CD4-positive, alpha-beta T cell (primary cell): ENCODE measurements at regions of chr7 and their contacts with region 1.

Region 1: GRCh38 chr7:95376632-95377315 is 19.4 kb downstream of the PON3 start:
- DNase-seq: peak in 2 of 14 experiments; percentile 13 to 29
- ATAC-seq: no peak
- H3K4me3 ChIP-seq: no peak overlapping the region
- H3K4me3 Mint-ChIP-seq: no peak overlapping the region
- H3K27ac ChIP-seq: no peak overlapping the region
- H3K27ac Mint-ChIP-seq: no peak overlapping the region
- H3K4me1 ChIP-seq: no peaks in the 10 kb centered on the region
- H3K4me1 Mint-ChIP-seq: no peaks in the 10 kb centered on the region
- H3K27me3 ChIP-seq: no peaks in the 10 kb centered on the region
- H3K27me3 Mint-ChIP-seq: peaks cover 5% of the 10 kb centered on the region
- CTCF ChIP-seq: no peak

Region 2: DNA sequence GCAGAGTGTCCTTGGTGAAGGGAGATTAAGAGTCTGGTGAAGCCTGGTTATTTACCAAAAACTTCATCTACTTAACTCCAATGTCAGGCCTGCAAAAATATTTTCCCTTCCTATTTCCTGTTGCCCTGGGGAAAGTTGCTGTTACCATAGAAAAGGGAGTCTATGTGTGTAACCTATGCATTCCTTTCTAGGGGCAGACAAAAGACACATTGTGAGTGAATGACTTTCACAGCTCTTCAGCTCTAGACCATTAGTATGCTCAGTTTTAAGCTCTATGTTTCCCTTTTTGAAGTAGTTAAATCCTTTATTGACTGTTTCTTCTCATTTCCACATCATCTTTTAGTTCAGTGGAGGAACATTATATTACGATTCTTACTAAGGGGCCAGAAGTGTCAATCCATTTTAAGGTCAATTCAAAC is 675.2 kb before region 1 on chr7:
- CTCF ChIA-PET with region 1: no interaction called
- POLR2A ChIA-PET with region 1: no interaction called
- intact Hi-C with region 1: loop called in 1 of 2 experiments (anchors 5 kb)
- DNase-seq: no peak
- ATAC-seq: no peak
- H3K4me3 ChIP-seq: no peak overlapping the region
- H3K4me3 Mint-ChIP-seq: no peak overlapping the region
- H3K27ac ChIP-seq: no peak overlapping the region
- H3K27ac Mint-ChIP-seq: no peak overlapping the region
- H3K4me1 ChIP-seq: no peaks in the 10 kb centered on the region
- H3K4me1 Mint-ChIP-seq: no peaks in the 10 kb centered on the region
- H3K27me3 ChIP-seq: peaks cover 0 to 3% of the 10 kb centered on the region in 2 experiments
- H3K27me3 Mint-ChIP-seq: peaks cover 15% of the 10 kb centered on the region
- CTCF ChIP-seq: no peak

Region 3: GRCh38 chr7:95213809-95214492 is 162.8 kb before region 1 on chr7:
- CTCF ChIA-PET with region 1: no interaction called
- POLR2A ChIA-PET with region 1: no interaction called
- intact Hi-C with region 1: no loop called
- DNase-seq: no peak
- ATAC-seq: no peak
- H3K4me3 ChIP-seq: no peak overlapping the region
- H3K4me3 Mint-ChIP-seq: no peak overlapping the region
- H3K27ac ChIP-seq: no peak overlapping the region
- H3K27ac Mint-ChIP-seq: no peak overlapping the region
- H3K4me1 ChIP-seq: no peaks in the 10 kb centered on the region
- H3K4me1 Mint-ChIP-seq: no peaks in the 10 kb centered on the region
- H3K27me3 ChIP-seq: no peaks in the 10 kb centered on the region
- H3K27me3 Mint-ChIP-seq: no peaks in the 10 kb centered on the region
- CTCF ChIP-seq: no peak

Region 4: DNA sequence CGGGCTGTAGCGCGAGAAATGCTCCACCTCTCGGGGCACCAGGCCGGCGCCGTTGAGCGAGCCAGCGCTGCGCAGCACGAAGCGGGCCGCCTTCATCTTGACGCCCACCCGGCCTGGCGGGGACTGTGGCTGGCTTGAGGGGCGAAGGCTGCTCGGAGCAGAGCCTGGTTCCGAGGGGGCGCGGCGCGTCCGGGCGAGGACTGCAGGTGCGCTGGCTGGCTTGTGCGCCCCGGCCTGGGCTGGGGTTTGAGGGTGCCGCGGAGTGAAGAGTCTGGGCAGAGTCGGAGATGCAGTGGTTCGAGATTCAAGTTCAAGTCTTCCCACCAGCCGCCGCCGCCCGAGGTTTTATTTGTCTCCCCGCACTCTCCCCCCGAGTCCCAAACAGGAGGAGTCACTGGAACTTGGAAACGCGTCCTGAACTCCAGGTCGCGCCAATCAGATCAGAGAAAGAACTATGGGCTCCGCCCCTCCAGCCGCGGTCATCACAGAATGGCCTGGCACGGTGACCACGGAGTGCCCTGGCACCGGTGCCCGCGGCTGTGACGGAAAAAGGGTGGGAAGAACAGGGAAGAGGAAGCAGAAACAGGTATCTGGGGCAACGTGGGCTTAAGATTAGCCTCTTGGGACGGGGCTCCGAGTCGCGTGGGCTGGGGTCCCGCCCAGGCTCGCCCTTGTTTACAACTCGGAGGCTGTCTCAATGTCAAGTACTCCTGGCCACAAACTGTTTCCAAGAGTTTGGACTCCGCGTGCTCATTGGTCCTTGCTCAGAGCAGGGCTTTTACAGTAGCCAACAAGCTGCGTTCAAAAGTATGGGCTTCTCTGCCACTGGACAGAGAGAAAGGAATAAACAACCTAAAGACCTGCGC is 219.7 kb after region 1 on chr7 and contains the start of gene PDK4:
- CTCF ChIA-PET with region 1: no interaction called
- POLR2A ChIA-PET with region 1: no interaction called
- intact Hi-C with region 1: no loop called
- DNase-seq: peak in 3 of 14 experiments; percentile 2 to 29 (median 23)
- ATAC-seq: no peak
- H3K4me3 ChIP-seq: peak within 1 kb of the TSS; percentile 29
- H3K4me3 Mint-ChIP-seq: no peak within 1 kb of the TSS
- H3K27ac ChIP-seq: no peak within 1 kb of the TSS
- H3K27ac Mint-ChIP-seq: no peak within 1 kb of the TSS
- H3K4me1 ChIP-seq: no peaks in the 10 kb centered on the region
- H3K4me1 Mint-ChIP-seq: peaks cover 4% of the 10 kb centered on the region
- H3K27me3 ChIP-seq: peaks cover 5 to 19% of the 10 kb centered on the region in 2 experiments
- H3K27me3 Mint-ChIP-seq: peaks cover 26% of the 10 kb centered on the region
- CTCF ChIP-seq: no peak
- total RNA-seq, gene PDK4: not detected

Region 5: DNA sequence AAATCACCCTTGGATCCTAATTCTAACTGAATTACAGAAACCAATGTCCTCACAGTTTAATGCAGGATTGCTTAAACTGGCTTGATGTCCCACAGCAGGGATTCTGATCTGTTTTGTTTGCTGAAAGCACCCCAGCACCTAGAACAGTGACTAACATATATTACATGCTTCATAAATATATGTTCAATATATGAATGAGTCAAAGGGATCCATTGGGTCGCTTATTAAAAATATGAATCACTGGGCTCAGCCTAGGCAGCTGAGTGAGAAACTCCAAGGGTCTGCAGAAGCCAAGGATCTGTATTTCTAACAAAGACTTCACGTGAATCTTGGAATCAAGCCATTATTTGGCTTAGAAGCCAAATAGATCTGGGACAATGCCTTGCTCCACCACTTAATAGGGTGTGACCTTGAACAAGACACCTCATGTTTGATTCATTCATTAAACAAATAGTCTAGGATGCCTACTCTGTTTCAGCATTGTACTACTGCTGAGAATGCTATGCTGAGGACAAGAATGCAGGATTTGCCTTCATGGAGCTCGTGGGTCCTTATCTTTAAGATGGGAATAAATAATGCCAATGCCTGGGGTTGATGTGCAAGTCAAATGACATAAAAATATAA is 1525.2 kb after region 1 on chr7:
- CTCF ChIA-PET with region 1: no interaction called
- POLR2A ChIA-PET with region 1: no interaction called
- intact Hi-C with region 1: no loop called
- DNase-seq: no peak
- ATAC-seq: no peak
- H3K4me3 ChIP-seq: no peak overlapping the region
- H3K4me3 Mint-ChIP-seq: no peak overlapping the region
- H3K27ac ChIP-seq: no peak overlapping the region
- H3K27ac Mint-ChIP-seq: no peak overlapping the region
- H3K4me1 ChIP-seq: no peaks in the 10 kb centered on the region
- H3K4me1 Mint-ChIP-seq: no peaks in the 10 kb centered on the region
- H3K27me3 ChIP-seq: peaks cover 0 to 5% of the 10 kb centered on the region in 2 experiments
- H3K27me3 Mint-ChIP-seq: peaks cover 10% of the 10 kb centered on the region
- CTCF ChIP-seq: no peak